ENCODE measurements at regions of chr3 and their contacts with region 1.

Region 1: DNA sequence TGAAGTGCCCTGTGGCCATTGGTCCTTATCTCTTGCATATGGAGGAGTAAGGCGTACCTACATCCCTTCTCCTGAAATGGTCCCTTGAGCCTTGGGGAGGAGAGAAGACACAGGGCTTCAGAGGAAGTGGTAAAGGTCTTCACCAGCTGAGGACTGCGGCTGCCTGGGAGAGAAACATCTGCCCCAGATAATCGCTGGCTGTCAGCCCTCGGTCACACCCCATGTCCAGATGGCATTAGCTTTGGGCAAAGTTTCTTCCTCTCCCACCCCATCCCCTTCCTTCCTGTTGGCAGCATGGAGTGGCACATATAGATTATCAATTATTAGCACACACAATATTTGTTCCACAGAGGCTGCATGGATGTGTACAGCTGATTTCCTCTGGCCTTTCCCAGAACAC is 61.6 kb downstream of the LRTM1 start:
- DNase-seq: no peak
- H3K4me3 Mint-ChIP-seq: no peak overlapping the region
- H3K27ac Mint-ChIP-seq: no peak overlapping the region
- H3K4me1 Mint-ChIP-seq: peaks cover 4% of the 10 kb centered on the region
- H3K27me3 Mint-ChIP-seq: no peaks in the 10 kb centered on the region

Region 2: DNA sequence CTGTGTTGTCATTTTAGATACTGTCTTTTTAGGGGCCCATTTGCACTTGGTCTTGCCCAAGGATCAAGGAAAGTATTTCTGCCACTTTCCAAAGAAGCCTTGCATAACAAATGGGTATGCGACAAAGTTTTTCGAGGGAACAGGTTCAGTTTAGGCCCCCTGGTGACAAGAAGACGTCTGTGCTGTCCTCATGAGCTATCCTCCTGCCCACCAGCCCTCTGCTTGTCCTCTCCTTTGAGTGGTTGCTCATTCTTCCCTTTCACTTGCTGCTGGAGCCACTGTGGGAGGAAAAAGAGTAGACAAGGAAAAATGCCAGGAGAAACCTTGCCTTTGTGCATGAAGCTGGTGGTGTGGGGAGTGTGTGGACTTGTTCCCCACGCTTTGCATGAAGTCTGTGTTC is 572.0 kb before region 1 on chr3:
- intact Hi-C with region 1: loop called (anchors 5 kb)
- DNase-seq: no peak
- H3K4me3 Mint-ChIP-seq: no peak overlapping the region
- H3K27ac Mint-ChIP-seq: no peak overlapping the region
- H3K4me1 Mint-ChIP-seq: no peaks in the 10 kb centered on the region
- H3K27me3 Mint-ChIP-seq: peaks cover 1% of the 10 kb centered on the region

Measured in activated T-helper 1 cell treated with anti-CD3 and anti-CD28 coated beads, Interleukin-12 subunit alpha, Interleukin-12 subunit beta, Interleukin-2, Interleukin-4 antibody, amounts not matched to agents 30 ng/mL and 10 ng/mL and 1 ng/mL, durations not matched to agents 14 hours and 24 hours and 36 hours (primary cell).